ENCODE measurements at regions of chr1 and their contacts with region 1.

Region 1: GRCh38 chr1:41573785-41574713 is 89.6 kb upstream of the EDN2 start:
- DNase-seq: peak; percentile 83
- ATAC-seq: peak; percentile 87

Region 2: GRCh38 chr1:41713557-41714327 is 139.7 kb after region 1 on chr1:
- intact Hi-C with region 1: no loop called
- DNase-seq: no peak
- ATAC-seq: no peak

Region 3: GRCh38 chr1:41795205-41795762 is 221.2 kb after region 1 on chr1:
- intact Hi-C with region 1: loop called (anchors 5 kb)
- DNase-seq: no peak
- ATAC-seq: no peak

Measured in Right ventricle myocardium inferior (tissue), 1 donor.